ENCODE measurements at regions of chr5 and their contacts with region 1.

Region 1: DNA sequence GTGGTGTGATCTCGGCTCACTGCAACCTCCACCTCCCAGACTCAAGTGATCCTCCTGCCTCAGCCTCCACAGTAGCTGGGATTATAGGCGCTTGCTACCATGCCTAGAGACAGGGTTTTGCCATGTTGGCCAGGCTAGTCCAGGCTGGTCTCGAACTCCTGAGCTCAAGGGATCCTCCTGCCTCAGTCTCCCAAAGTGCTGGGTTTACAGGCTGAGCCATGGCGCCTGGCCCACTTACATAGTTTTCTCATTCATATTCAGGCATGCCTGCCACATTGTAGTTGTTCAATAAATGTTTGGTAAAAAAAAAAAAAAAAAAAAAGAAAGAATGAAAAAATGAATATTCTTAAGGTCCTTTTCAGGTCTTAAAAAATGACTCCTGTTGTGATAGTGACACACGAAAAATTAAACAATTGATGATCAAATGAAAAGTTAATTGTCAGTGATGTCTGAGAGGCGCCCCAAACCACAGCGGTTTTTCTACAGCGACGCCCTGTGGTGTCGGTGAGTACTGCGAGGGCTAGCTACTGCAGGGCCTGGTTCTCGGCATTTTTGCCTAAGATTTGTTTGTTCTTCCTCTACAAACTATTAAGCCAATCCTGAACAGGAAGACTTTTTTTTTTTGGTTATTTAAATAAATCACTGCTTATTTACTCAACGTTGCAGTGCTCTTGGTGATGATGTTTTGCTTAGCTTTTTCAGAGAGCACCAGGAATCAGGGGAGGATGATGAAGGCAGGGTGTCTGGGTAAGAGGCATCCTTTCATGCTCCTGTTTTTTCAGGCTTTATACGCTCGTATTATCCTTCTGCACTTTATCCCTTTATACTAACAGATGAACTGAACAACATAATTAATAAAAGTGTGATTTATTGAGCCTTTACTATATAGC is 67.0 kb upstream of the DPYSL3 start:
- DNase-seq: peak in 5 of 6 donors; percentile 20 to 86 (median 49)
- ATAC-seq: peak; percentile 78 to 91 (median 87)
- H3K4me3 ChIP-seq: no peak overlapping the region
- H3K27ac ChIP-seq: no peak overlapping the region
- H3K4me1 ChIP-seq: no peaks in the 10 kb centered on the region
- H3K27me3 ChIP-seq: no peaks in the 10 kb centered on the region
- CTCF ChIP-seq: peak; percentile 45 to 80 (median 70)

Region 2: GRCh38 chr5:147310059-147310704 is 266.7 kb before region 1 on chr5:
- intact Hi-C with region 1: no loop called
- DNase-seq: peak; percentile 27 to 74 (median 50)
- ATAC-seq: peak; percentile 48 to 98 (median 94)
- H3K4me3 ChIP-seq: no peak overlapping the region
- H3K27ac ChIP-seq: no peak overlapping the region
- H3K4me1 ChIP-seq: no peaks in the 10 kb centered on the region
- H3K27me3 ChIP-seq: no peaks in the 10 kb centered on the region
- CTCF ChIP-seq: no peak

Region 3: DNA sequence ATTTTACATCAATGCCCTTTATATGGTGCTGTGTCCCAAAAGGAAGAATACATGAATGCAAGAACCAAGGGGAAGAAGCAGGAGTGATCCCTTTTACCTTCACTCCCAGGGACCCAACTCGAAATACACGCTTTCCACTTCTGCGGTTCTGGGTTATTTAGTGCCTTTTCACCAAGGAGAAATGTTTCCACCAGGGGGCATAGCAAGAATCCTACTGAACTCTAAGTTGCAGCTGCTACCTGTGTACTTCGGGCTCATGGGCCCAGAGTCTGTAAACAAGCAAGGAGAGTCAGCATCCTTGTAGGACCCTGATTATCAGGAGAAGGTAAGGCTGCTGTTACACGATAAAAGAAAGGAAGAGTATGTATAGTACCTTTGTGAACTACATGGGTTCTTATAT is 112.7 kb before region 1 on chr5:
- intact Hi-C with region 1: loop called in 2 of 3 experiments (anchors 5 to 10 kb)
- DNase-seq: peak in 2 of 6 donors; percentile 6 to 15
- ATAC-seq: peak in 3 of 4 donors; percentile 65 to 66 (median 66)
- H3K4me3 ChIP-seq: no peak overlapping the region
- H3K27ac ChIP-seq: no peak overlapping the region
- H3K4me1 ChIP-seq: no peaks in the 10 kb centered on the region
- H3K27me3 ChIP-seq: no peaks in the 10 kb centered on the region
- CTCF ChIP-seq: peak in 1 of 4 donors; percentile 19